ENCODE measurements at regions of chr6 and their contacts with region 1.

Region 1: DNA sequence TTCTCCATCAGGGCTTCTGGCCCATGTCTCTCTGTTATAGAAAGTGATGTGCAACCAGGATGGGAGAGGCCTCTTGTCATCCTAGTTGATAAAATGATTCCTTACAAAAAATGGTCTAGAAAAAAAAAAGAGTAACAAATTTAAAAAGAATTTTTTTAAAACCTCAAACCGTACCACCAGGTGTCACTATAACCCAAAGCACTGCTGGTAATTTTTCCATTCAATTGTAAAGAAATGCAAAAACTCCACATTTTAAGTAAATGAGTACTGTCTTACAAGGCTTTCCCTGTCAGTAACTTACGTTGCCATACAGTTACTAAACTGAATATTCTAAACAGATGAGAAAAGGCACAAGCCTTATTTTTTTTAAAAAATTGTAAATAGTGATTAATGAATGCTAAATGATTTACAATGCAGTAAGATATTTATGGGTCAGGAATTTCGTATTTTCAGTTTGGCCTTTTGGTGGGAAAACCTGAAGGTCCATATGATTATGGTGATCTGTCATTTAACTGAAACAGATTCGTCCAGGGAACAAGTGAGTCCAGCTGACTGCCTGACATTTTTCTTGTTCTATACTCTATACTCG is 95.4 kb downstream of the OGFRL1 start:
- DNase-seq: no peak

Region 2: GRCh38 chr6:71420693-71421328 is 36.8 kb after region 1 on chr6:
- intact Hi-C with region 1: loop called (anchors 5 kb)
- DNase-seq: peak; percentile 95 to 99 (median 97)

Region 3: GRCh38 chr6:71444222-71444621 is 60.2 kb after region 1 on chr6:
- intact Hi-C with region 1: loop called (anchors 2 kb)
- DNase-seq: no peak

Region 4: DNA sequence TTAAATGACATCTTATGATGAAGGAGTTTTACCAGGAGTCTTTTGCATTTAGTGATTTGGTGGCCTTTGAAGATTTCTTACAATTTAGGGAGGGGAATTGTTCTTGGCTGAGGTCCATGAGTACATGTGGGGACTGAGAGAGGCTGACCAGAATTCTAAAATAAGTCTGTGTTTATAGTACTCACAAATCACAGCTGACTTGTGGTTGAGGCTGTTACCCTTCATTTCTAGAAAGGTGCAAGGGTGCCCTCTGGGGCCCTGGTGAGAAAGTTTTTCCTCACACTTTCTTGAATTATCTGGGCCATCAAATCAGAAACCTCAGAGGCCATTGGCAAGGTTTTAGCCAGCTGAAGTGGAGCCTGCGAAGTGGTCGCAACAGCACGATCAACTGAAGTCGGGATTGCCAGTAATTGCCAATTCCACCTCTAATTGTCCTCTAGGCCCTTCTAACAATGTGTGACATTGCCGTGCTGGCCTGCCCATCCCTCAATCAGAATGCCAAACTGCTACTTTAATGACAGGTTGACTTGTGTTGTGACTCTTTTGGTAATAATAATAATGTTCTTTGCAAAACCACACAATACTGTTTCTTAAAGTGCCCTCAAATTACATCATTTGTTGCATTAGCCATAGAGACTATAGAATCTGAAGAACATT is 126.2 kb after region 1 on chr6:
- intact Hi-C with region 1: loop called (anchors 2 kb)
- DNase-seq: peak in 7 of 10 donors; percentile 22 to 71 (median 35)

Region 5: GRCh38 chr6:72084992-72085569 is 701.1 kb after region 1 on chr6:
- intact Hi-C with region 1: loop called (anchors 10 kb)
- DNase-seq: no peak

Measured in posterior cingulate gyrus (tissue), 11 donors.